GM13976 (cell line): ENCODE measurements at regions of chr6 and their contacts with region 1.

Region 1: GRCh38 chr6:117829594-117830319 is 77.3 kb upstream of the SLC35F1 start:
- DNase-seq: peak; percentile 30
- CTCF ChIP-seq: peak; percentile 18

Region 2: DNA sequence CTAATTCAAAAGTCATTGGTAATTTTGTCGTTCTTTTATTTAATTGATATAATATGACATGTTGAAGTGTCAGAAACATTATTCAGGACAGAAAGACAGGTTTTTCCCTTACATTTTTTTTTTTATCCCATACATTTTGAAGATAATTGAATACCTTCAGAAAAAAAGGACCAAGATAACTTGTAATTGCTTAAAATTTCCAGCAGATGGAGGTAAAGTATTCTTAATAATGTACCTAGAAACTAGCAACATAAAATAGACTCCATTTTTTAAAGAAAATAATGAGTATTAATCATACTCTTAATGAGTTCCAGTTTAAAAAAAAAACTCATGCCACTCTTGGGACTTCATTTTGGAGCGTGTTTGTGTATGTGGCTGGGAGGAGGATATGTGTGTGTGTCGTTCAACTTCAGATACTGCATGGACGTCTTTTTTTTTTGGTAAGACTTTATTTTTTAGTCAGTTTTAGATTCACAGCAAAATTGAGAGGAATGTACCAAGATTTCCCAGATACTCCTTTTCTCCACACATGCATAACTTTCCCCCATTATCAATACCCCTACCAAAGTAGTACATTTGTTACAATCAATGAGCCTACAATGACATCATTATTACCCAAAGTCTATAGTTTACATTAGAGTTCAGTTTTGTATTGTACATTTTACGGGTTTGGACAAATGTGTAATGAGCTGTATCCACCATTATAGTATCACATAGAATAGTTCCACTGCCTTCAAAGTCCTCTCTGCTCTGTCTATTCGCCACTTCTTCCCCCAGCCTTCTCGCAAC is 483.4 kb before region 1 on chr6:
- in situ Hi-C with region 1: loop called (anchors 25 kb)
- DNase-seq: peak; percentile 14
- CTCF ChIP-seq: no peak

Region 3: GRCh38 chr6:117449549-117450439 is 380.0 kb before region 1 on chr6:
- in situ Hi-C with region 1: loop called (anchors 10 kb)
- DNase-seq: peak; percentile 35
- CTCF ChIP-seq: peak; percentile 64